ENCODE measurements at regions of chr17 and their contacts with region 1.

Region 1: DNA sequence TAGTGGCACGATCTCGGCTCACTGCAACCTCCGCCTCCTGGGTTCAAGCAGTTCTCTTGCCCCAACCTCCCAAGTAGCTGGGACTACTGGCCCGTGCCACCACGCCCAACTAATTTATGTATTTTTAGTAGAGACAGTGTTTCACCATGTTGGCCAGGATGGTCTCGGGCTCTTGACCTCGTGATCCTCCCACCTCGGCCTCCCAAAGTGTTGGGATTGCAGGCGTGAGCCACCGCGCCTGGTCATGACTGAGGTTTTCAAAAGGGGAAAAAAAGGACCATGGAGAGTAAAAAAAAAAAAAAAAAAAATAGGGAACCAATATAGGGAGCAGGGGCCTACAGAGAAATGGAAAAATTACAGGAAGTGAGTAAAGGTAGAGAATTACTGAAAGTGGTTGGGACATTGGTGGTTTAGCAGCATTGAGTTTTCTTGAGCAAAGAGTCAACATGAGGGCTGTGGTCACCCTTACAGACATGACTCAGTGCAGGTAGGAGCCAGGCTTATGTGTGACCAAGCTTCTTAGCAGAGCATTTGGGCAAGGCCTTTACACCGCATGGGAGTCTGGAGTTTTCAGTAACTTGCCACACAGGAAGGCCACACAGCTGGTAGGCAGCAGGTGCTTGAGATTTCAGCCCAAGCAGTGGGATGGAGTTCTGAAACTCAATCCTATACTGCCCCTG is 447.3 kb downstream of the HS3ST3B1 start:
- DNase-seq: peak; percentile 49 to 78 (median 67)
- H3K4me3 ChIP-seq: no peak overlapping the region
- H3K4me3 Mint-ChIP-seq: no peak overlapping the region
- H3K27ac ChIP-seq: no peak overlapping the region
- H3K27ac Mint-ChIP-seq: peak overlapping the region in 6 of 7 donors; percentile 8 to 88 (median 52)
- H3K4me1 ChIP-seq: peaks cover 35 to 48% of the 10 kb centered on the region in 2 donors
- H3K4me1 Mint-ChIP-seq: peaks cover 44% of the 10 kb centered on the region
- H3K27me3 ChIP-seq: no peaks in the 10 kb centered on the region
- H3K27me3 Mint-ChIP-seq: peaks cover 0 to 6% (median 0%) of the 10 kb centered on the region in 3 donors
- CTCF ChIP-seq: no peak

Region 2: DNA sequence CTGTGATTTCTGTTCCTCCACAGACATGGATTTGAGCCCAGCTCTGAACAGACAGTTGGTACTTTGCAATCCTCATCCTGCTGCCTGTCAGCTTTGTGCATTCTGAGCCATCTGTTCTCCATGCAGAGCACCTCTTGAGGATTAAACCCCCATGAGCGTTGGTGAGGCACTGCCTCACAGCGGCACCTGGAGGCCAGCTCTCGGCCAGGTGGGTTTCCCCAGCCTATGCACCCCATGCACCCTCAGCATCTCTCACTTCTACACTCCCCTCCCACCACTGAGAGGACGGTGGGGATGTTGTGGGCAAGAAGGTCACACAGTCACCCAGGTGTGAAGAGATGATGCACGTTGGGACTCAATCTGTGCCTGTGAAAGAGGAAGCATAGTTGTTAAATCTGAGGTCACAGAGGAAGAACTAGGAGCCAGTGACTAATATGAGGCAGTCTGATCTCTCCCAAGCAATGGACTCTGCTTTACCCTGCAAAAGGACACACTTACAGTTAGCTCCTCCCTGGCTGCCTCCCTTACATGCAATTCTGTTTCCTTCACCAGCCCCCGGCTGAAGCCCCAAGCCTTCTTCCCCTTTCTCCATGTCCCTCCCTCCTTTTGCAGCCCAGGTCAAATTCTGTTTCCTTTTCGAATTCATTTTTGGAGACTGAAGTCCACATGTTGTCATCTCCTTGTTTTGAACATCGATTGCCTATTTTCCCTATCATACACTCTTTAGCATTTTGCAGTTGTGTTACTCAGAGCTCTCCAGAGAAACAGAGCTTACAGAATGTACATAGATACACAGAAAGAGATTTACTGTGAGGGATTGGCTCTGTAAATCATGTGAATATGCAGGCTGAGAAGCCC is 388.8 kb before region 1 on chr17:
- intact Hi-C with region 1: loop called in 1 of 2 experiments (anchors 10 kb)
- DNase-seq: peak; percentile 90 to 94 (median 91)
- H3K4me3 ChIP-seq: peak overlapping the region in 1 of 3 experiments; percentile 49
- H3K4me3 Mint-ChIP-seq: peak overlapping the region in 1 of 2 donors; percentile 59
- H3K27ac ChIP-seq: peak overlapping the region; percentile 49 to 82
- H3K27ac Mint-ChIP-seq: peak overlapping the region; percentile 61 to 97 (median 83)
- H3K4me1 ChIP-seq: peaks cover 25 to 27% of the 10 kb centered on the region in 2 donors
- H3K4me1 Mint-ChIP-seq: peaks cover 27% of the 10 kb centered on the region
- H3K27me3 ChIP-seq: no peaks in the 10 kb centered on the region
- H3K27me3 Mint-ChIP-seq: no peaks in the 10 kb centered on the region
- CTCF ChIP-seq: no peak

Region 3: DNA sequence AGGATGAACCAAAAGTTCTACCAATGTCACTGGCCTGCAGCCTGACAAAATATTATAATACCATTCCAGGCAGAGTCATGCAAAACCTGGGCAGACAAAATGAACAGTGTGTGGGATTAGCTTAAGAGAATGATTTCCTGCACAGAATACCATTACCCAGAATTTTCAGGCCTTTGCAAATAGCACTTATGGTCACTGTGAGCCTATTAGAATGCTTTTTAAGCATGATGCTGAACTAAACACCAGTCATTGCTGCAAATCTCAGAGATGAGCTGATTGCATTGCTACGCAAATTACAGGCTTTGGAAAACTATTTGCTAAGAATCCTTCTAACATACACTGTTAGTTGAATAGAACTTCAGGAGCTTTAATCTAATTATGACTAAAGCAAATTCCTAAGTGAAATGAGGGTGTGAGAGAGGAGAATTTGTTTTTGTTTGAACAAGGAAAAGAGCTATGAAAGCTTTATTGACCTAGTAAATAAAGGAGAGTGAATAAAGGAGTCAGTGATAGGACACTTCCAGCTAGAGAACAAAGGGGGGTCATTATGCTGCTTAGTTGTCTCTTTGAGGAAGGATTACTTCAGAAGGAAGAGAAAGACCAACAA is 48.5 kb before region 1 on chr17:
- intact Hi-C with region 1: no loop called
- DNase-seq: no peak
- H3K4me3 ChIP-seq: no peak overlapping the region
- H3K4me3 Mint-ChIP-seq: no peak overlapping the region
- H3K27ac ChIP-seq: no peak overlapping the region
- H3K27ac Mint-ChIP-seq: no peak overlapping the region
- H3K4me1 ChIP-seq: peaks cover 4 to 7% of the 10 kb centered on the region in 2 donors
- H3K4me1 Mint-ChIP-seq: peaks cover 7% of the 10 kb centered on the region
- H3K27me3 ChIP-seq: no peaks in the 10 kb centered on the region
- H3K27me3 Mint-ChIP-seq: no peaks in the 10 kb centered on the region
- CTCF ChIP-seq: no peak

Region 4: DNA sequence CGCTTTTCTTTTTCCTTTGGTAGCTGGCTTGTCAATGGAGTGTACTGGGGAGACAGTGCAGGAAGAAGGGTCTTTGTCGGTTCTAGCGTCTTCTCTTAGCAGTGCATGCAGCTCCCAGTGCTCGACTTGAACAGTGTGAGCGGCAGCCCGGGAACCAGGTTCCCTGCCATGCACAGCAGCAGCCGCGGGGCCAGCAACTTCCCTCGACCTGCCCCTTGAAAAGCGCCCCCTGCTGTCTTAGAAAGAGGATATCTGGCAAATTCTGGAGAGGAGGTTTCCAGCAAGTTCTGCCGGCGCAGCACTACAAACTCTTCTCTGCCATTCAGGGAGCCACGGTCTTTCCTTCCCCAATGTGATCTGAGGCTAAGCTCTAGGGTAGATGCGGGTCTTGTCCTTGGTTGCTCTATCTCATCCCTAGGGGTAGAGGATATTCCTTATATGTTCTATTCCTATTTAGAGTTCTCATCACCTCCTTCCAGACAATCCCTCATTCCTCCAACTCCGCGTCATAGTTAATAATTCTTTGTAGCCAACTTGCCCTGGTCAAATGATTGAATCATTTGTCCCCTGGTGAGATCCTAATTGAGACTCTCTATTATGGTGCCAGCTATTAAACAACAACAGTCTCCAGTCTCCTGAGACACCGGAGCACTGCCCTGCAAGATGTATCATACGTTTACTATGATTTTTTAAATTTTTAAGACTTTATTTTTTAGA is 65.6 kb after region 1 on chr17:
- intact Hi-C with region 1: no loop called
- DNase-seq: peak; percentile 10 to 46 (median 40)
- H3K4me3 ChIP-seq: no peak overlapping the region
- H3K4me3 Mint-ChIP-seq: peak overlapping the region in 1 of 2 donors; percentile 56
- H3K27ac ChIP-seq: no peak overlapping the region
- H3K27ac Mint-ChIP-seq: no peak overlapping the region
- H3K4me1 ChIP-seq: no peaks in the 10 kb centered on the region
- H3K4me1 Mint-ChIP-seq: peaks cover 10% of the 10 kb centered on the region
- H3K27me3 ChIP-seq: no peaks in the 10 kb centered on the region
- H3K27me3 Mint-ChIP-seq: peaks cover 0 to 4% (median 0%) of the 10 kb centered on the region in 3 donors
- CTCF ChIP-seq: peak; percentile 69

Region 5: DNA sequence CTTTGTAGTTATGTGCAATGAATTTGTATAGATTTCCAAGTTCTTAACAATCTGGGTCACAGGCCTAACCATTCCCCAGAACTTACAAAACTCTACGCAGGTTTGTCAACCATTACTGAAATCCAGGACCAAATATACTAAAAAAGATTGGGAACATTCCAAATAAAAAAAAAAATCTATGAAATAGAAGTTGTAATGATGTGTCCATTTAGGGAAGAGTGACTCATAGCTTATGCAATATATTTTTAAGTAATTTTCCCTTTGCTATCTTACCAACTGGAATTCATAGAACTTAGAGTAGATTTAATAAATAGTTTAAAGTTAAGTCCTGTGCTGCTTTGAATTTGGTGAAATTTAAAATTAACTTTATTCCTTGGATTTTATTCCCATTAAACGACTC is 123.8 kb after region 1 on chr17:
- intact Hi-C with region 1: no loop called
- DNase-seq: peak in 2 of 3 donors; percentile 4 to 8
- H3K4me3 ChIP-seq: no peak overlapping the region
- H3K4me3 Mint-ChIP-seq: no peak overlapping the region
- H3K27ac ChIP-seq: no peak overlapping the region
- H3K27ac Mint-ChIP-seq: peak overlapping the region in 2 of 7 donors; percentile 23 to 65
- H3K4me1 ChIP-seq: peaks cover 0 to 6% of the 10 kb centered on the region in 2 donors
- H3K4me1 Mint-ChIP-seq: peaks cover 9% of the 10 kb centered on the region
- H3K27me3 ChIP-seq: no peaks in the 10 kb centered on the region
- H3K27me3 Mint-ChIP-seq: no peaks in the 10 kb centered on the region
- CTCF ChIP-seq: no peak